ENCODE measurements at regions of chr14 and their contacts with region 1.

Region 1: DNA sequence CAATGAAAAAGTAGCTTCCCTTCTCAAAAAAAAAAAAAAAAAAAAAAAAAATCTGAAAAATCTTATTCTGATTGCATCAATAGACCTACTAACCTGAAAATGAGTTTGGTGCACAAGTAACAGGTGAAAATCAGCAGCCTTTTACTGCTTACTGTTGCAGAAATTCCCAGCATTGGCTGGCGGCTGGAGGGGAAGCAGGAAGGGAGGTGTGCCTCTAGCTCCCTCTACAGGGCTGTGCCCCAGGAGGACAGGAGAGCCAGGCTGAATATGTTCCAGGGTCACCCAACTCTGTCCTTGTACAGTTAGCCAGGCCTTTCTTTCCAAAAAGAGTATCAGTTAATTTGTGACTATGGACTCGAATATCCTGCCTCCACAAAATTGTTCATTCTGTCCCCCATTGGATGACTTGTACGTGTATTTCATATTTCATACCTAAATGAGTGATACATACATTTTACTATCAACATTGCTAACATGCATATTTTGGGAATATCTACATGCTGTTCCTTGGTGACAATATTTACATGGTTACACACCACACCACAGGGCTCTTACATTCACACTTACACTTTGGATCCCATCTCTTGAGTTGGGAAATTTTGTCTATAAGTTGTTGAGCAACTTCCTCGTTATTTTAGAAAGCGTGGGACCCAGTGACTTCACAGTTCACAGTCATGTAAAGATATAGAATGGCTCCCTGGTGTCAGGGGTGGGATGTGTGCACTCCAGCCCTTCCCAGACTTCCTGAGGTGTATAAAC is 124.8 kb downstream of the SAMD4A start:
- DNase-seq: peak; percentile 60 to 84 (median 76)
- ATAC-seq: peak; percentile 93 to 98 (median 97)
- H3K4me3 ChIP-seq: no peak overlapping the region
- H3K27ac ChIP-seq: no peak overlapping the region
- H3K4me1 ChIP-seq: peaks cover 0 to 1% (median 0%) of the 10 kb centered on the region in 3 donors
- H3K27me3 ChIP-seq: no peaks in the 10 kb centered on the region
- CTCF ChIP-seq: peak; percentile 54 to 83 (median 76)

Region 2: GRCh38 chr14:54566410-54567223 is 125.1 kb before region 1 on chr14 and contains the start of gene SAMD4A:
- intact Hi-C with region 1: loop called in 2 of 3 experiments (anchors 5 to 10 kb)
- DNase-seq: peak; percentile 59 to 89 (median 74)
- ATAC-seq: peak; percentile 8 to 31 (median 28)
- H3K4me3 ChIP-seq: peak within 1 kb of the TSS; percentile 65 to 73 (median 66)
- H3K27ac ChIP-seq: peak within 1 kb of the TSS; percentile 98 to 99 (median 98)
- H3K4me1 ChIP-seq: peaks cover 0 to 5% (median 4%) of the 10 kb centered on the region in 3 donors
- H3K27me3 ChIP-seq: no peaks in the 10 kb centered on the region
- CTCF ChIP-seq: no peak
- total RNA-seq, gene SAMD4A: 5.1 to 12.2 (median 9.6) TPM

Region 3: DNA sequence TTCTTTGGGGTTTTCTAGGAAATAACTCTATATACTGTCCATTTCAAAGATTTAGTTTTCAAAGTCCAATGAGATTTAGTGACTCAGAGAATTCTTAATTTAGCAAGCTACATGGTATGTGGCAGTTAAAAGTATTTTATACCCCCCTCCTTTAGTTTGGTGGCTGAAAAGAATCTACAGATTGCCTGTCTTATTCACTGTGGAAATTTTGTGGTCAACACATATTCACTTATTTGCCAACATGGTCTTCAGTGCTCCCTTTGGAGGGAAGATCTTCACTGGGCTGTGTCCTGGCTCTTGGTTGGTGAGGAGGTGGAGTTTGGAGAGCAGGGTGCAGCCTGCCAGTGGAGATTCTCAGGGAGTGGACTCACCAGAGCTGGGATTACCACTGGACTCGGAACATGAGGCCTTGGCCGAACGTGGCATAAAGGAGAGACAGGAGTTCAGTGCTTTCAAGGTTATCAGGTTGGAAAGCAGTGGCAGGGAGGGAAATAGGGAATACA is 85.0 kb before region 1 on chr14:
- intact Hi-C with region 1: no loop called
- DNase-seq: no peak
- ATAC-seq: no peak
- H3K4me3 ChIP-seq: no peak overlapping the region
- H3K27ac ChIP-seq: no peak overlapping the region
- H3K4me1 ChIP-seq: no peaks in the 10 kb centered on the region
- H3K27me3 ChIP-seq: no peaks in the 10 kb centered on the region
- CTCF ChIP-seq: no peak

Region 4: DNA sequence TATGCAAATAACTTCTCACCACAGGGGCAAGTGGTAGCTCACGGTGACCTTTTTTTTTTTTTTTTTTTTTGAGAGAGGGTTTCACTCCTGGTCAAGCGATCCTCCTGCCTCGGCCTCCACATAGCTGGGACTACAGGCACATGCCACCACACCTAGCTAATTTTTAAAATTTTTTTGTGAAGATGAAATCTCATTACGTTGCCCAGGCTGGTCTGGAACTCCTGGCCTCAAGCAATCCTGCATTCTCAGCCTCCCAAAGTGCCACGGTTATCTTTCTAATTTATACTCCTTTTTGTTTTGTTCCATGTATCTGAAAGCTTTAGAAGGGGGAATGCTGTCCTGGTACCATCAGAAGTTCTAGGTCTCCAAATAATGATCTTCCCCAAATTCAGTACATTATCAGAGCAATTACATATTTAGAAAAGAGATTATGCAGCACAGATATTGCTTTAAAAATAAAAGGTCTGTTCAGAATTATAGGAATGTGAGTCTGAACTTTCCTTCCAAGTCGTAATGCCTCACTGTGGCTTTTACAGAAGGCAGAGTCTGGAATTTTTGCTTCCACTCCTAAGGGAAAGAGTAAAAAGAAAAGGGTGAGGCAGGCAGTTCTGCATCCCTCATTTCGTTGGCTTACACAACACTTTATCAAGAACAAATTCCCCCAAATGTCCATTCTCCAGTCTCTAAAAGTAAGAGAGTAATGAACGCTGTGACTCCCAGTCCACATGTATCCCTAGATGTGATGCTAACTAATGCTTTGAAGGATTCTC is 137.9 kb after region 1 on chr14:
- intact Hi-C with region 1: no loop called
- DNase-seq: no peak
- ATAC-seq: no peak
- H3K4me3 ChIP-seq: no peak overlapping the region
- H3K27ac ChIP-seq: no peak overlapping the region
- H3K4me1 ChIP-seq: no peaks in the 10 kb centered on the region
- H3K27me3 ChIP-seq: no peaks in the 10 kb centered on the region
- CTCF ChIP-seq: no peak